H1 (cell line): ENCODE measurements at regions of chr14 and their contacts with region 1.

Region 1: GRCh38 chr14:38208618-38209562 is 1.2 kb downstream of the SSTR1 start:
- DNase-seq: peak in 1 of 2 experiments; percentile 79
- H3K4me3 ChIP-seq: peak overlapping the region; percentile 28 to 59 (median 35)
- H3K27ac ChIP-seq: no peak overlapping the region
- H3K4me1 ChIP-seq: peaks cover 2 to 20% (median 12%) of the 10 kb centered on the region in 4 experiments
- H3K27me3 ChIP-seq: peaks cover 58 to 81% (median 75%) of the 10 kb centered on the region in 4 experiments
- CTCF ChIP-seq: 0 out of 4 replicates have a peak, but pooled peaks of 1 of the 3 experiments have one; percentile 15
- EP300 ChIP-seq: peak in 1 of 2 experiments; percentile 29; a peak in 1 of 3 replicates
- POLR2A ChIP-seq: peak in 1 of 2 experiments; percentile 63; a peak in 2 of 3 replicates
- RAD21 ChIP-seq: peak; percentile 4 to 45; a peak in 2 of 4 replicates

Region 2: DNA sequence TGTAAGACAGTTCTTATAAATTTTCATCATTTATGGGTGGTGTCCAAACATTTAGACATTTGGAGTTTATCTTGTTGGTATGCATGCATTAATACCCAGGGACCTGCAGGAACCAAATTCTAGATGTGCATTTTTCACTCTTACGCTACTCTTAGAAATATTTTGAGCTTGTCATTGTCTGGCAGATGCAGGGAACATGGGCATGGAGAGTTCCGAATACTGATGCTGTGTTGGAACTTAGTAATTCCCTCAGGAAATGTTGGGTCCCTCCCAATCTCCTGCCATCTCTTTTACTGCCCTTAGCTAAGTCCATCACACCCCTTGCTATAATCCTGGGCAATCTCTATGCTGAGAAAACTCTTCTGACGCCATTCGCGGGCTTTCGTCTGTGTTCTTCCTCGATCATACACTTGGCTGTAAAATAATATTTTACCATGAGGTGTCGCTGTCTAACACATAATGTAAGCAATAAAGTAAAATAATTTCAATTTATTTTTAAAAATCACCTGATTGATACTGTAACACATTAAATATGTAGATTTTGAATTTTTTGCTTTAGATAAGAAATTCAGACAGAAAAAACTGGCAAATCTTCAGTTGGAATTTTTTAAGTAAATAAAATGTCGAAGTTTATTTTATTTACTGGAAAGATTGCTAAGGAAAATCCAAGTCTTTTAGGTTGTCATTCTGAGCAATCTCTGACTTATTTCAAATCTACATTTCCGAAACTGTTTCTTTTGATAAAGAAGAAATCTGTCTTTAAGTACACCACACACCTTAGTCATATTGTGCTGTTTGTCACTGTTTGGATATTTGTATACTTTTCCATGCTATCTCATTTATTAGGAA is 305.3 kb before region 1 on chr14:
- CTCF ChIA-PET with region 1: interaction called, 8 read pairs
- POLR2A ChIA-PET with region 1: interaction called, 53 read pairs
- DNase-seq: no peak
- H3K4me3 ChIP-seq: no peak overlapping the region
- H3K27ac ChIP-seq: no peak overlapping the region
- H3K4me1 ChIP-seq: peaks cover 0 to 2% (median 0%) of the 10 kb centered on the region in 4 experiments; a peak in 1 of 7 replicates
- H3K27me3 ChIP-seq: peaks cover 0 to 5% (median under 1%) of the 10 kb centered on the region in 4 experiments; a peak in 2 of 7 replicates
- CTCF ChIP-seq: peak in 2 of 3 experiments; percentile 50 to 54; a peak in 3 of 4 replicates
- EP300 ChIP-seq: no peak
- POLR2A ChIP-seq: no peak
- RAD21 ChIP-seq: peak; percentile 79 to 82

Region 3: DNA sequence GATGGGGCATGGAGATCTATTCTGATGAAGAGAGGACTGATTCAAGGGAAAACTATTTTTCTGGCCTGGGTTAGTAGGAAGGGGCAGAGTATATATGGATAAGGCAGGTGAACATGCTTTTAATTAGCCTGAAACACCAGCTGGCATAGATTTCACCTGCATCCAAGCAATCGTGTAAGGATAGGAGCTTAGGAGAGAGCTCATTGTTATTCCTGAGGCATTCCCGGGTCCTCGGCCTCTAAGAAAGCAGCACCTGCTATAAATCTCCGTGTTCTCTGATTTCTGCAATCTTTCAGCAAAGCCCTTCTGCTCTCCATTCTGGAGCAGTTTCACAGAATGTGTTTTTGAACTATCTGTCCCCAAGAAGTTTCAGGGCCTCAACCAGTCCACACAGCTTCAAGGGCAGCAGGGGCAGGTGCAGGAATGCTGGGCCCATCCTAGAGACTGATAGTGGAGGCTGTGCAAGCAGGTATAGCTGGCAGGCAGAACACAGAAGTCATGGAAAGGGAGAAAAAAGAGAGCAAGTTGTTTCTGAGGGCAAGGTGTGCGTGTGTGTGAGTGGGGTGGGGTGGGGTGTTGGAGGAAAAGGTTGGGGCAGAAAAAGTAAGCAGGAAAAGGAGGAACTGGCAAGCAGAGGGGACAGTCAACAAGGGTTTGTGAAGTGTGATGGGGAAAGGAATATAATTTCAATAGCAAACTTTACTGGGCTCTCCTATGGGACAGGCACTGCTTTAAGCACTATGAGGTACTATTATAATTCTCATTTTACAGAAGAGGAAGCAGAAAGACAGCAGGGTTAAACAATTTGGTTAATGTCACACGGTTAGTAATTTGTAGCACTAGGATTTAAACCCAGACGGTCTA is 204.9 kb before region 1 on chr14:
- CTCF ChIA-PET with region 1: no interaction called
- POLR2A ChIA-PET with region 1: interaction called, 17 read pairs
- DNase-seq: no peak
- H3K4me3 ChIP-seq: no peak overlapping the region
- H3K27ac ChIP-seq: no peak overlapping the region
- H3K4me1 ChIP-seq: peaks cover 2 to 8% (median 3%) of the 10 kb centered on the region in 4 experiments; a peak in 4 of 7 replicates
- H3K27me3 ChIP-seq: no peaks in the 10 kb centered on the region
- CTCF ChIP-seq: no peak
- EP300 ChIP-seq: no peak
- POLR2A ChIP-seq: no peak
- RAD21 ChIP-seq: no peak

Region 4: GRCh38 chr14:38255673-38256532 is 47.0 kb after region 1 on chr14 and contains the start of gene CLEC14A:
- CTCF ChIA-PET with region 1: interaction called, 3 read pairs
- POLR2A ChIA-PET with region 1: interaction called, 33 read pairs
- DNase-seq: peak; percentile 3 to 77
- H3K4me3 ChIP-seq: peak within 1 kb of the TSS; percentile 37 to 66 (median 57)
- H3K27ac ChIP-seq: no peak within 1 kb of the TSS
- H3K4me1 ChIP-seq: peaks cover 0 to 14% (median 6%) of the 10 kb centered on the region in 4 experiments; a peak in 5 of 7 replicates
- H3K27me3 ChIP-seq: peaks cover 28 to 55% (median 43%) of the 10 kb centered on the region in 4 experiments
- CTCF ChIP-seq: no peak
- EP300 ChIP-seq: no peak
- POLR2A ChIP-seq: no peak
- RAD21 ChIP-seq: no peak
- total RNA-seq, gene CLEC14A: 0.13 TPM in 2 replicates